Right cardiac atrium (tissue), 5 donors: ENCODE measurements at regions of chr7 and their contacts with region 1.

Region 1: GRCh38 chr7:121113288-121113687 is 124.8 kb downstream of the CPED1 start:
- DNase-seq: no peak
- ATAC-seq: no peak
- H3K4me3 ChIP-seq: no peak overlapping the region
- H3K27ac ChIP-seq: no peak overlapping the region
- H3K4me1 ChIP-seq: no peaks in the 10 kb centered on the region
- H3K27me3 ChIP-seq: no peaks in the 10 kb centered on the region

Region 2: GRCh38 chr7:120792091-120792860 is 321.0 kb before region 1 on chr7:
- intact Hi-C with region 1: loop called in 1 of 4 experiments (anchors 10 kb)
- DNase-seq: peak; percentile 77 to 90 (median 89)
- ATAC-seq: peak; percentile 82 to 91
- H3K4me3 ChIP-seq: no peak overlapping the region
- H3K27ac ChIP-seq: no peak overlapping the region
- H3K4me1 ChIP-seq: peaks cover 2% of the 10 kb centered on the region
- H3K27me3 ChIP-seq: no peaks in the 10 kb centered on the region